ENCODE measurements at regions of chr18 and their contacts with region 1.

Region 1: DNA sequence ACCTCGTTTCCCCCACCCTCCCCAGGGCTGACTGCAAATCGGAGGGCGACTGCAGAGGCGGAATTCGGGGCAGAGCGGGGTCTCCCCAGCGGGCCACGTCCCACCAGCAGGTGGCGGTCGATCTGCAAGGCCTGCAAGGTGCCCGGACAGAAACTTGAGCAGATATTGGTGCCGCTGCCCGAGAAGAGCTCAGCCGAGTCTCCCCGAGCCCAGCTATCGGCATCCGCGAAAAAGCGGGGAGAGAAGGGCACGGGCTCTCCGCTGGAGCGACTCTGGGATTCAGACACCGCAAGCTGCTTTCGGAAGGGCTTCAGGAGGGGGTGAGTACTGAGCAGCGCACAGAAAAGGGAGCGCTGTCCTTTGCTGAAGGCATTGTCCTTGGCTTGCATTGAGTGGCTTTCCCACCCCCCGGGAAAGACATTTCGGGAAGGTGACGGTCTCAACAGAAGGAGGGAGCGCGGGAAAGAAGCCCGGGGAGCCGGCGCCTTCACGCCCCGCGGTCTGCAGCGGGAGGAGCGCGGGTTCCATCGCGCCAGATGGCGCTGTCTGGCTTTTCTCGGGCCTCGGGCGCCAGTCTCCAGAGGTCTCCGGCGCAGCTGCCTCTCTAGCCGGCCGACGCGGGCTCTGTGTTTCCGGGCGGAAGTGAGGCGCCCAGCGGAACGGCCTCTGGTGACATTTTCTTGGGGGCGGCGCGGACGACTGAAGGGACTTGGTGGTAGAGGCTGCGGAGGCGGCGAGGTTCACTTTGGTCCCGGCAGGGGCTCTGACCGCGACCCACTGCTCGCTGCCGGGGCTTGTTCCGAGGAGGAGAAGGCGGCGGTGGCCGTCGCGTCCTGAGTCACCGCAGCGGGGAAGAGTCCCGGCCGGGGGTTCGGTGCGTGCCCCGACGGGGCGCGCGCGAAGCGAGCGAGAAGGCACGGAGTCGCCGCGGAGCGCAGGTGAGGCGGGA is 69.5 kb downstream of the HAUS1 start:
- DNase-seq: peak; percentile 86 to 99 (median 94)

Region 2: GRCh38 chr18:46097801-46098615 is 75.7 kb before region 1 on chr18 and contains the start of gene ATP5F1A:
- intact Hi-C with region 1: loop called (anchors 10 kb)
- DNase-seq: peak; percentile 87 to 98 (median 92)

Region 3: DNA sequence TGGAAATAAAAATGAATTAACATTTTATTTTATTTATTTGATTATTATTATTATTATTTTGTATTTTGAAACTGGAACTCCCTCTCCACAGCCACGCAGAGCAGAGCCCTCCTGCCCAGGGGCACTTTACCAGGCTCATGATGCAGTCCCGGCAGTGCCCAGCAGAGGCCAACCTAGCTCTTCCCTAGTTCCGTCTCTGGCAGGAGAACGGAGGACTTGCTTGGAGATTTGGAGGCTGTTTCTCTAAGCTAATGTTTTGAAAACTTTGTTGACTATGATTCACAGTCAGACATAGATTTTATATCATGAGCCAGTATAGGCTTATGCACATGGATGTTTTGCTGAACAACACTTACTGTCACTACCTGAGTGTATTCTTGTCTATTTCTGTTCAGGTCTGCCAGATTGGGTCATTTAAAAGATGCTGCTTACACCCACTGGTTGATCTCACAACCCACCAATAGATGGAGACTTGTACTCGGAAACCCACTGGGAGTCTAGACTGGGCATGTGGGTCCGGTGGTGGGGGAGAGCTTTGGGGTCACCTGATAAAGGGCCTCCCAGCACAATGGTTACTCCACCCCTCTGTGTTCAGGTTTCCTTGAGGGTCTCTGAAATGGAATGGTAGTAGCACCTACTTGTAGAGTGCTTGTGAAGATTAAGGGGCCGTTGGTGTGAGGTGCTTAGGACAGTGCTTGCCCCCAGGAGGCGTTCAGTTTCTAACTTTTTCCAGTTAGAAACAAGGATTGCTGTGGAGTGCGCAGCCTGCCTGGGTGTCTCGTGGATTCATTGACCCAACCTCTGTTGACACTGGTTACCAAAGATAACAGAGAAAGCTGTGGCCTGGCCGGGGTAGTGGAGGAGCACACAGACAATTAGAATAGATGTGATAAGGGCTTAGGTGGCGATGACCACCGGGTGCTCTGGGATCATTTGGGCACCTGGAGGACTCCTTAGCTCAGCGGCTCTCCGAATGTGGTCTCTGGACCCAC is 107.8 kb after region 1 on chr18:
- intact Hi-C with region 1: loop called (anchors 10 kb)
- DNase-seq: peak; percentile 44 to 96 (median 75)

Measured in posterior cingulate gyrus (tissue), 11 donors.